ENCODE measurements at regions of chr2 and their contacts with region 1.

Region 1: GRCh38 chr2:74178201-74179062 is at the start of gene MOB1A:
- DNase-seq: peak; percentile 99
- ATAC-seq: peak; percentile 99
- H3K4me3 ChIP-seq: peak within 1 kb of the TSS; percentile 94 to 96
- H3K27ac ChIP-seq: peak within 1 kb of the TSS; percentile 58 to 83
- H3K4me1 ChIP-seq: peaks cover 0 to 4% of the 10 kb centered on the region in 2 donors
- H3K27me3 ChIP-seq: no peaks in the 10 kb centered on the region
- total RNA-seq, gene MOB1A: 101 to 105 TPM

Region 2: GRCh38 chr2:73828818-73829570 is 349.4 kb before region 1 on chr2 and contains the start of gene STAMBP:
- intact Hi-C with region 1: no loop called
- DNase-seq: peak; percentile 98 to 99
- ATAC-seq: peak; percentile 98
- H3K4me3 ChIP-seq: peak within 1 kb of the TSS; percentile 62
- H3K27ac ChIP-seq: peak within 1 kb of the TSS; percentile 64 to 96
- H3K4me1 ChIP-seq: peaks cover 2 to 3% of the 10 kb centered on the region in 2 donors
- H3K27me3 ChIP-seq: no peaks in the 10 kb centered on the region
- total RNA-seq, gene STAMBP: 32.4 to 33.2 TPM

Region 3: GRCh38 chr2:74198461-74199274 is 20.2 kb after region 1 on chr2 and contains the start of gene MTHFD2:
- intact Hi-C with region 1: loop called in 1 of 2 experiments (anchors 1 kb)
- DNase-seq: peak; percentile 96 to 97
- ATAC-seq: peak; percentile 94
- H3K4me3 ChIP-seq: peak within 1 kb of the TSS; percentile 54 to 70
- H3K27ac ChIP-seq: peak within 1 kb of the TSS; percentile 45 to 92
- H3K4me1 ChIP-seq: no peaks in the 10 kb centered on the region
- H3K27me3 ChIP-seq: no peaks in the 10 kb centered on the region
- total RNA-seq, gene MTHFD2: 55.7 to 119 TPM

Measured in aorta (tissue), 5 donors.